RWPE1 (cell line): ENCODE measurements at regions of chr3 and their contacts with region 1.

Region 1: GRCh38 chr3:197256836-197257444 is 41.5 kb downstream of the DLG1 start:
- DNase-seq: peak; percentile 22
- H3K27ac ChIP-seq: no peak overlapping the region
- CTCF ChIP-seq: peak; percentile 82

Region 2: DNA sequence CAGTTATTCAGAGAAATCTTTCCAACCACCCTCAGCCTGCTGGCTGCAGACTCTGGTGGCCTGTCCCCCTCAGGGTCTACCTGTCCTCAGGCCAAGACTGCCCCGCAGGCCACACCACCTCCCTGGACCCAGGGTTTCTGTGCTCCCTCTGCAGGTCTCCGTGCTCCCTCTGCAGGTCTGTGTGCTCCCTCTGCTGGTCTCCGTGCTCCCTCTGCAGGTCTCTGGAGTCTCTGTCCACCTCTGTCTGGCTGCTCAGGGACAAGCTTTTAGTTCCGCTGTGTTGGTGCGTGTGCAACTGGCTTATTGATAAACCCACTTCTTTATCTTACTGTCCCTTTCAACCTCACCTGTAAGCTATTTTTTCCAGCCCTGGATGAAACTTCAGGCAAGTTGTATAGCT is 268.8 kb after region 1 on chr3:
- CTCF ChIA-PET with region 1: interaction called, 12 read pairs
- POLR2A ChIA-PET with region 1: no interaction called
- DNase-seq: no peak
- H3K27ac ChIP-seq: 0 out of 2 replicates have a peak overlapping the region, but pooled peaks have one; percentile 9
- CTCF ChIP-seq: no peak